Astrocyte of the cerebellum (primary cell): ENCODE measurements at regions of chr18 and their contacts with region 1.

Region 1: DNA sequence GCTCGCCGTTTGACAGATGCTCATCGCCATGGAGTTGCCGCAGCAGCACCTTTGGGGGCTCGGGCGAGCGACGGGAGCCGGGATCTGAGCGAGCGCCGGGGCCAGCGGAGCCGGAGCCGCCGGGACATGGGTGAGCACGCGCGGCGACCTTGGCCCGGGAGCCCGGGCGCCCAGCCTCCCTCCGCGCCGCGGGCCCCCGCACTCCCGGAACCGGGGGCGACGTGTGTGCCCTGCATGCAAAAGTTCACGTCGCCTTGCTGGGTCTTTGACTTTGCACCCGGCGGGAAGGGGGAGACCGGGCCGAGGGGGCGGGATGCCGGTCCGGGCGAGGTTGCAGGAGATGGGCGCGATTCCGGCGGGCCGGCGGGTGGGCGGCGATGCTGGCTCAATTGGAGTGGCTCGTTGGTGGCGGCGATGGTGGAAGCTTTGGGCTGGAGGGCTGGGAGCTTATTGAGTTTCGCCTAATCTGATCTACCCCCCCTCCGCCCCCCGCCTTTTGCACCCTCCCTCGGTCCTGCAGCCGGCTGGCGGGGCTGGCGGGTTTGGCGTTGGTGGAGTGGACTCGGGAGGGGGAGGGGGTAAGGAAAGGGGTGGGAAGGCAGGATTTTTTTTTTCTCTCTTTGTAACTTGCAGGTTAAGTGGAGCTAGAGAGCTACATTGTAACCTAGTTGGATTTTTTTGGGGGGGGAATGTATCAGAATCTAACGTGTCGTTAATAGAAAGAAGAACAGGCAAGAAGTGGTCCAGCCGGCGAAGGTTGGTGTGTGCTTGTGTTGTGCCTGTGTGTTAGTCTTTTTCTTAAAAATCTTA is at the start of gene SETBP1:
- DNase-seq: peak; percentile 39
- H3K4me3 ChIP-seq: peak within 1 kb of the TSS; percentile 60
- CTCF ChIP-seq: peak; percentile 8

Region 2: GRCh38 chr18:44777457-44778192 is 97.2 kb after region 1 on chr18:
- in situ Hi-C with region 1: loop called (anchors 5 kb)
- DNase-seq: no peak
- H3K4me3 ChIP-seq: no peak overlapping the region
- CTCF ChIP-seq: no peak